ENCODE measurements at regions of chr5 and their contacts with region 1.

Region 1: GRCh38 chr5:168219515-168220410 is 71.7 kb upstream of the WWC1 start:
- DNase-seq: peak; percentile 33
- H3K4me3 Mint-ChIP-seq: no peak overlapping the region
- H3K27ac Mint-ChIP-seq: no peak overlapping the region
- H3K4me1 Mint-ChIP-seq: peaks cover 2% of the 10 kb centered on the region
- H3K27me3 Mint-ChIP-seq: peaks cover 6% of the 10 kb centered on the region

Region 2: DNA sequence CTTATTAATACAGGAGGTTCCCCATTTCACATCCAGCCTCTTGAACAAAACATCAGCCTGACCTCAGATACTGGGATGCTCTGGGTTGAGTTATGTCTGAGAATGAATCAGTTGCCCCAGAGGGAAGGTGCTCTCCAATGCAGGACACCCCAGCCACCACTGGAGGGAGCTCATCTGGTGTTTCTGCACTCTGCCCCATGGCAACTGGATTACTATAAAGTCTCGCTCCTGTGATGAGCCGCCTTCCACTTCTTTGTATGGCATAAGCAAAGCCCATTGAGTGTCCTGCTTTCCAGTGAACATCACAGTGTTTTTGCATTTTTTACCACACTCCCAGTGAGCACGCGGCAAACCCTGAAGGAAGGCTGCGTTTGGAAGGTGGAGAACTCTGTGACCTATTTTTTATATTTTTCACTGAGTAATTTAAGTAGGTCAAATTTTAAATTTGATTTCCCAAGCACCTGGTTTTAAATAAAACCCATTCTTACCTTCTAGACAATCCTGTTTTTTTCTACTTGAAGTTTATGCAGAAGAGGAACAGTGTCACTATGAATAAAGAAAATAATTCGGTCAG is 105.2 kb before region 1 on chr5:
- CTCF ChIA-PET with region 1: interaction called, 31 read pairs
- POLR2A ChIA-PET with region 1: no interaction called
- intact Hi-C with region 1: loop called (anchors 1 kb)
- DNase-seq: peak; percentile 74
- H3K4me3 Mint-ChIP-seq: no peak overlapping the region
- H3K27ac Mint-ChIP-seq: no peak overlapping the region
- H3K4me1 Mint-ChIP-seq: no peaks in the 10 kb centered on the region
- H3K27me3 Mint-ChIP-seq: peaks cover 13% of the 10 kb centered on the region